BJ (cell line): ENCODE measurements at regions of chr2 and their contacts with region 1.

Region 1: GRCh38 chr2:238847841-238848690 is at the start of gene TWIST2:
- DNase-seq: peak; percentile 86
- H3K4me3 ChIP-seq: peak within 1 kb of the TSS; percentile 100
- H3K27me3 ChIP-seq: no peaks in the 10 kb centered on the region
- CTCF ChIP-seq: peak; percentile 32; the same call in 1 of the 2 replicates
- polyA plus RNA-seq, gene TWIST2: 110 and 127 TPM in 2 replicates

Region 2: GRCh38 chr2:238803996-238804870 is 43.8 kb before region 1 on chr2:
- CTCF ChIA-PET with region 1: no interaction called
- POLR2A ChIA-PET with region 1: no interaction called
- DNase-seq: peak; percentile 21
- H3K4me3 ChIP-seq: no peak overlapping the region
- H3K27me3 ChIP-seq: peaks cover 2% of the 10 kb centered on the region
- CTCF ChIP-seq: no peak

Region 3: GRCh38 chr2:238875101-238875470 is 27.0 kb after region 1 on chr2:
- CTCF ChIA-PET with region 1: interaction called, 10 read pairs
- POLR2A ChIA-PET with region 1: no interaction called
- DNase-seq: no peak
- H3K4me3 ChIP-seq: no peak overlapping the region
- H3K27me3 ChIP-seq: no peaks in the 10 kb centered on the region
- CTCF ChIP-seq: peak; percentile 66